ENCODE measurements at regions of chr19 and their contacts with region 1.

Region 1: GRCh38 chr19:48993175-48994034 is at the starts of genes GYS1 and RUVBL2:
- DNase-seq: peak; percentile 96 to 100 (median 99)
- ATAC-seq: peak; percentile 95
- H3K4me3 ChIP-seq: peak within 1 kb of the TSS; percentile 70
- H3K4me3 Mint-ChIP-seq: peak within 1 kb of the TSS; percentile 95 to 100 (median 96)
- H3K27ac ChIP-seq: peak within 1 kb of the TSS; percentile 80
- H3K27ac Mint-ChIP-seq: peak within 1 kb of the TSS; percentile 89 to 99 (median 97)
- H3K4me1 ChIP-seq: peaks cover 23 to 24% of the 10 kb centered on the region in 2 donors
- H3K4me1 Mint-ChIP-seq: peaks cover 40 to 59% (median 46%) of the 10 kb centered on the region in 7 donors
- H3K27me3 ChIP-seq: no peaks in the 10 kb centered on the region
- H3K27me3 Mint-ChIP-seq: no peaks in the 10 kb centered on the region
- total RNA-seq, gene GYS1: 27.3 to 82.3 (median 50.7) TPM
- total RNA-seq, gene RUVBL2: 23.4 to 94.0 (median 24.1) TPM

Region 2: DNA sequence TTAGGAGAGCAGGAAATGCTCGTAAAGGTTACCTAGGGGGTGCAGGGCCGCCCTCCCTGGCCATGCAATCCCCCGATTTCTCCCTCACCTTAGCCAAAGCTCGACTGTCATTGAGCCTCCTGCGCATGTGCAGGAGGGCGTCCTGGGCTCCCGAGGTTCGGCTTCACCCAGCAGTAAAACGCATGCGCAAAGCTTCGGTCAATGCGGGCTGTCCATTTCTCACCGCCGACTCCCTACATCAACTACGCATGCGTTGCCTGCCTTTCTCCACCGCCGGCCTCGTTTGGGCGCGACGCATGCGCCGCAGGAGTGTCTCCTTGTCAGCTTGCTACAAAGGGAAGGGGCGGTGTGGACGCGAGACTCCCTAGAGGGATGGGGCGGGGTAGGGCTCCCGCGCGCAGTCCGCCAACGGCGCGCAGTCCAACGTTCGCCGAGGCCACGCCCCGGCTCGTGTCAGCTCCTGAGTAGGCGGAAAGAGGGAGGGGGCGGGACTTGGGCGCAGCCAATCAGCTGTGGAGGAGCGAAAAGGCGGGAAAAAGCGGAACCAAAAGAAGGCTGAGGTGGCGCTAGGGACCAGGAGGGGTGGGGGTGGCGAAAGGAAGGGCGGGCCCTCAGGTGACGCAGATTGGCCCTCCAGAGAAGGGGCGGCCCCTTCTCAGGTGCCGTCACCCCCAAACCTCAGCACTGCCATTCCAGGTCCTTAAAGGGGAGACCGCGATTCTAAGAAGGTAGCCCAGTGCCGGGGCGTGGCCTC is 629.4 kb before region 1 on chr19 and contains the starts of genes SYNGR4 and TMEM143:
- CTCF ChIA-PET with region 1: no interaction called
- POLR2A ChIA-PET with region 1: no interaction called
- intact Hi-C with region 1: loop called in 1 of 2 experiments (anchors 1 kb)
- DNase-seq: peak; percentile 91 to 100 (median 99)
- ATAC-seq: peak; percentile 96
- H3K4me3 ChIP-seq: peak within 1 kb of the TSS; percentile 87
- H3K4me3 Mint-ChIP-seq: peak within 1 kb of the TSS; percentile 80 to 97 (median 92)
- H3K27ac ChIP-seq: peak within 1 kb of the TSS; percentile 86
- H3K27ac Mint-ChIP-seq: peak within 1 kb of the TSS; percentile 89 to 98 (median 95)
- H3K4me1 ChIP-seq: peaks cover 9 to 13% of the 10 kb centered on the region in 2 donors
- H3K4me1 Mint-ChIP-seq: peaks cover 0 to 28% (median 6%) of the 10 kb centered on the region in 7 donors
- H3K27me3 ChIP-seq: no peaks in the 10 kb centered on the region
- H3K27me3 Mint-ChIP-seq: peaks cover 0 to 3% (median 0%) of the 10 kb centered on the region in 5 donors
- total RNA-seq, gene SYNGR4: not detected
- total RNA-seq, gene TMEM143: 11.6 to 39.8 (median 20.1) TPM

Region 3: GRCh38 chr19:48812094-48812929 is 181.1 kb before region 1 on chr19:
- CTCF ChIA-PET with region 1: no interaction called
- POLR2A ChIA-PET with region 1: interaction called, 3 read pairs
- intact Hi-C with region 1: loop called in 1 of 2 experiments (anchors 1 kb)
- DNase-seq: peak in 8 of 9 donors; percentile 25 to 68 (median 48)
- ATAC-seq: peak; percentile 65
- H3K4me3 ChIP-seq: no peak overlapping the region
- H3K4me3 Mint-ChIP-seq: peak overlapping the region; percentile 76 to 89 (median 82)
- H3K27ac ChIP-seq: peak overlapping the region; percentile 40
- H3K27ac Mint-ChIP-seq: peak overlapping the region; percentile 54 to 87 (median 78)
- H3K4me1 ChIP-seq: peaks cover 10% of the 10 kb centered on the region in 2 donors
- H3K4me1 Mint-ChIP-seq: peaks cover 16 to 49% (median 41%) of the 10 kb centered on the region in 7 donors
- H3K27me3 ChIP-seq: no peaks in the 10 kb centered on the region
- H3K27me3 Mint-ChIP-seq: no peaks in the 10 kb centered on the region

Region 4: GRCh38 chr19:48982280-48982679 is 11.1 kb before region 1 on chr19:
- CTCF ChIA-PET with region 1: interaction called, 5 read pairs
- POLR2A ChIA-PET with region 1: interaction called, 22 read pairs
- intact Hi-C with region 1: no loop called
- DNase-seq: no peak
- ATAC-seq: no peak
- H3K4me3 ChIP-seq: no peak overlapping the region
- H3K4me3 Mint-ChIP-seq: no peak overlapping the region
- H3K27ac ChIP-seq: no peak overlapping the region
- H3K27ac Mint-ChIP-seq: no peak overlapping the region
- H3K4me1 ChIP-seq: no peaks in the 10 kb centered on the region
- H3K4me1 Mint-ChIP-seq: peaks cover 0 to 9% (median 0%) of the 10 kb centered on the region in 7 donors
- H3K27me3 ChIP-seq: no peaks in the 10 kb centered on the region
- H3K27me3 Mint-ChIP-seq: no peaks in the 10 kb centered on the region

Region 5: GRCh38 chr19:49127674-49128544 is 134.5 kb after region 1 on chr19:
- CTCF ChIA-PET with region 1: no interaction called
- POLR2A ChIA-PET with region 1: no interaction called
- intact Hi-C with region 1: loop called in 1 of 2 experiments (anchors 1 kb)
- DNase-seq: peak; percentile 89 to 97 (median 94)
- ATAC-seq: peak; percentile 99
- H3K4me3 ChIP-seq: peak overlapping the region; percentile 71
- H3K4me3 Mint-ChIP-seq: peak overlapping the region; percentile 82 to 98 (median 90)
- H3K27ac ChIP-seq: no peak overlapping the region
- H3K27ac Mint-ChIP-seq: peak overlapping the region; percentile 8 to 98 (median 88)
- H3K4me1 ChIP-seq: peaks cover 5 to 8% of the 10 kb centered on the region in 2 donors
- H3K4me1 Mint-ChIP-seq: peaks cover 10 to 18% (median 12%) of the 10 kb centered on the region in 7 donors
- H3K27me3 ChIP-seq: no peaks in the 10 kb centered on the region
- H3K27me3 Mint-ChIP-seq: peaks cover 0 to 14% (median 0%) of the 10 kb centered on the region in 5 donors

Region 6: DNA sequence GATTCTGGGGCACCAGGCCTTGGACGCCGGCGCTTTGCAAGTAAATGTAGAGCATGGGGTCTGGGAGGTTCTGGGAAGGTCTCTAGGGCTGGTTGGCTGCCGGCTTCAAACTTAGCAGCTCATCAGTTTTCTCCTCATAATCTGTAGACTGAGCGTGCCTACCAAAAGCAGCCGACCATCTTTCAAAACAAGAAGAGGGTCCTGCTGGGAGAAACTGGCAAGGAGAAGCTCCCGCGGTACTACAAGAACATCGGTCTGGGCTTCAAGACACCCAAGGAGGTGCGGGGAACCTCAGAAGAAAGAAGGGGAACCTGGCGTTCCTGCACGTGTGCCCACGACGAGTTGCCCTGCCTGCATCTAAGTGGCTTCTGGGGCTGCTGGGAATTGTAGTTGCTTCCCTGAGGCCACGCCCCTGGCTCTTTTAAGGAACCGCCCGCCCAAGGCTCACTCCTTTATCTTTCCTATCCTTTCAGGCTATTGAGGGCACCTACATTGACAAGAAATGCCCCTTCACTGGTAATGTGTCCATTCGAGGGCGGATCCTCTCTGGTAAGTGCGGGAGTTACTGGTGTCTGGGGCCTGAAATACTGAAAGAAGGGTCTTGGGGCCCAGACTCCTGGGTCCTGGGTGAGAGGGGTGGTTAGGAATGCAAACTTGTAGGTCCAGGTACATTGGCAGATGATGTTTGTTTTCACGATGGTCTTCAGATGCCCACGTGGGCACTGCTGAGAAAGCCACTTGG is 503.8 kb after region 1 on chr19:
- CTCF ChIA-PET with region 1: no interaction called
- POLR2A ChIA-PET with region 1: no interaction called
- intact Hi-C with region 1: loop called in 1 of 2 experiments (anchors 5 kb)
- DNase-seq: peak; percentile 55 to 85 (median 77)
- ATAC-seq: peak; percentile 20
- H3K4me3 ChIP-seq: peak overlapping the region; percentile 97
- H3K4me3 Mint-ChIP-seq: peak overlapping the region; percentile 96 to 100 (median 99)
- H3K27ac ChIP-seq: peak overlapping the region; percentile 99
- H3K27ac Mint-ChIP-seq: peak overlapping the region; percentile 91 to 100 (median 98)
- H3K4me1 ChIP-seq: peaks cover 21 to 40% of the 10 kb centered on the region in 2 donors
- H3K4me1 Mint-ChIP-seq: peaks cover 32 to 64% (median 50%) of the 10 kb centered on the region in 7 donors
- H3K27me3 ChIP-seq: no peaks in the 10 kb centered on the region
- H3K27me3 Mint-ChIP-seq: peaks cover 0 to 12% (median 0%) of the 10 kb centered on the region in 5 donors

Region 7: GRCh38 chr19:50025024-50025789 is 1031.8 kb after region 1 on chr19 and contains the start of gene VRK3:
- CTCF ChIA-PET with region 1: no interaction called
- POLR2A ChIA-PET with region 1: no interaction called
- intact Hi-C with region 1: loop called in 1 of 2 experiments (anchors 2 kb)
- DNase-seq: peak; percentile 93 to 100 (median 99)
- ATAC-seq: peak; percentile 91
- H3K4me3 ChIP-seq: peak within 1 kb of the TSS; percentile 85
- H3K4me3 Mint-ChIP-seq: peak within 1 kb of the TSS; percentile 93 to 99 (median 94)
- H3K27ac ChIP-seq: peak within 1 kb of the TSS; percentile 96
- H3K27ac Mint-ChIP-seq: peak within 1 kb of the TSS; percentile 98 to 100 (median 99)
- H3K4me1 ChIP-seq: peaks cover 19 to 29% of the 10 kb centered on the region in 2 donors
- H3K4me1 Mint-ChIP-seq: peaks cover 30 to 73% (median 58%) of the 10 kb centered on the region in 7 donors
- H3K27me3 ChIP-seq: no peaks in the 10 kb centered on the region
- H3K27me3 Mint-ChIP-seq: peaks cover 0 to 6% (median 0%) of the 10 kb centered on the region in 5 donors
- total RNA-seq, gene VRK3: 70.6 to 121 (median 84.7) TPM